SK-N-SH (cell line): ENCODE measurements at regions of chrX and their contacts with region 1.

Region 1: DNA sequence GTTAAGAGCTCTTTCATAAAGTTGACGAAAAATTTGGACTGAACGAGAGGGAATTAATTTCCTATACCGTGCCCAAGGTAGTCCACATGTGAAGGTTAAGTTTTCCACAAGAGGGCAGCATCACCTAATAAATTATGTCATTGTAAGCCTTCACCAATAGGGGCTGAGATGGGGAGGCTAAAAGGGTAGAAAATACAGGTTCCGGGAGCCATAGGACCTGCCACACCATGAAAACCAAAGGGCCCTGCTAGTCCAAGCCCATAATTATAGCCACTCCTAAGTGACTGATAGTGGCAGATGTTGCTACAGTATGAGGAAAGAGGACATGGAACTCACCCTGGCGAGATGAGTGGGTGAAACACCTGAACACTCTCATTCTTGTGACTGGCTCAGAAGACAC is 122.2 kb downstream of the SHROOM4 start:
- DNase-seq: peak; percentile 49
- H3K4me3 ChIP-seq: peak overlapping the region in 1 of 2 experiments; percentile 27; a peak in 1 of 4 replicates
- H3K27ac ChIP-seq: no peak overlapping the region
- H3K4me1 ChIP-seq: no peaks in the 10 kb centered on the region
- H3K27me3 ChIP-seq: no peaks in the 10 kb centered on the region
- CTCF ChIP-seq: peak; percentile 81
- EP300 ChIP-seq: no peak
- RAD21 ChIP-seq: peak; percentile 76

Region 2: DNA sequence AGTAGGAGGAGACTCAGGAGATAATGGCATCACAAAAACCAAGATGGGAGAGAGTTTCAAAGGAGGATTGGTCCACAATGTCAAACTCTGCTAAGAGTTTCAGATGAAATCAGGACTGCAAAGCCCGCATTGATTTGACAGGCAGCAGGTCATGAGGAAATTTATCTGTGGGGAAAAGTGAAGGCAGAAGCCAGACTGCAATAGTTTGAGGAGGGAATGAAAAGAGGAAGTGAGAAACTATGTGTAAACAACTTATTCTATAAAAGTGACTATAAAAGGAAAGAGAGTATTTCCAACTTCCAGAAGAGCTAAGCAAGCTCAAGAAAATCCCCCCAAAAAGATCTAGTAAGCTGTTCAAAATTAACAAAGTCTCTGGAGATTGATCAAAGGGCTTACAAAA is 154.9 kb before region 1 on chrX:
- CTCF ChIA-PET with region 1: no interaction called
- POLR2A ChIA-PET with region 1: no interaction called
- DNase-seq: no peak
- H3K4me3 ChIP-seq: no peak overlapping the region
- H3K27ac ChIP-seq: no peak overlapping the region
- H3K4me1 ChIP-seq: no peaks in the 10 kb centered on the region
- H3K27me3 ChIP-seq: peaks cover 4% of the 10 kb centered on the region; the same call in 1 of the 2 replicates
- CTCF ChIP-seq: no peak
- EP300 ChIP-seq: no peak
- RAD21 ChIP-seq: no peak

Region 3: GRCh38 chrX:50680990-50681389 is 10.8 kb before region 1 on chrX:
- CTCF ChIA-PET with region 1: interaction called, 28 read pairs
- POLR2A ChIA-PET with region 1: no interaction called
- DNase-seq: peak; percentile 6
- H3K4me3 ChIP-seq: no peak overlapping the region
- H3K27ac ChIP-seq: no peak overlapping the region
- H3K4me1 ChIP-seq: no peaks in the 10 kb centered on the region
- H3K27me3 ChIP-seq: no peaks in the 10 kb centered on the region
- CTCF ChIP-seq: peak; percentile 40
- EP300 ChIP-seq: no peak
- RAD21 ChIP-seq: peak; percentile 54

Region 4: GRCh38 chrX:50762578-50762977 is 70.8 kb after region 1 on chrX:
- CTCF ChIA-PET with region 1: no interaction called
- POLR2A ChIA-PET with region 1: no interaction called
- DNase-seq: no peak
- H3K4me3 ChIP-seq: no peak overlapping the region
- H3K27ac ChIP-seq: no peak overlapping the region
- H3K4me1 ChIP-seq: no peaks in the 10 kb centered on the region
- H3K27me3 ChIP-seq: no peaks in the 10 kb centered on the region; the same call in 1 of the 2 replicates
- CTCF ChIP-seq: no peak
- EP300 ChIP-seq: no peak
- RAD21 ChIP-seq: no peak

Region 5: DNA sequence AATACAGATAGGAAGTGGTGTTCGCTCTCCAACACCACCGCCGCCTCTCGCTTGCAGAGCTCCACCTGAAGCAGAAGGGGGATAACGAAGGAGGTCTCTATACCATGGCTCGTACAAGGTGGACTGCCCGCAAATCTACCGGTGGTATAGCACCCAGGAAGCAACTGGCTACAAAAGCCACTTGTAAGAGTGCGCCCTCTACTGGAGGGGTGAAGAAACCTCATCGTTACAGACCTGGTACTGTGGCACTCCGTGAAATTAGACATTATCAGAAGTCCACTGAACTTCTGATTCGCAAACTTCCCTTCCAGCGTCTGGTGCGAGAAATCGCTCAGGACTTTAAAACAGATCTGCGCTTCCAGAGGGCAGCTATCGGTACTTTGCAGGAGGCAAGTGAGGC is 213.5 kb after region 1 on chrX:
- CTCF ChIA-PET with region 1: interaction called, 11 read pairs
- POLR2A ChIA-PET with region 1: no interaction called
- DNase-seq: no peak
- H3K4me3 ChIP-seq: no peak overlapping the region
- H3K27ac ChIP-seq: no peak overlapping the region
- H3K4me1 ChIP-seq: no peaks in the 10 kb centered on the region
- H3K27me3 ChIP-seq: peaks cover 9% of the 10 kb centered on the region; the same call in 1 of the 2 replicates
- CTCF ChIP-seq: peak; percentile 49
- EP300 ChIP-seq: no peak
- RAD21 ChIP-seq: no peak